Activated B cell treated with CpG ODN at 0.5 μM for 24 hours (primary cell): ENCODE measurements at regions of chr18 and their contacts with region 1.

Region 1: DNA sequence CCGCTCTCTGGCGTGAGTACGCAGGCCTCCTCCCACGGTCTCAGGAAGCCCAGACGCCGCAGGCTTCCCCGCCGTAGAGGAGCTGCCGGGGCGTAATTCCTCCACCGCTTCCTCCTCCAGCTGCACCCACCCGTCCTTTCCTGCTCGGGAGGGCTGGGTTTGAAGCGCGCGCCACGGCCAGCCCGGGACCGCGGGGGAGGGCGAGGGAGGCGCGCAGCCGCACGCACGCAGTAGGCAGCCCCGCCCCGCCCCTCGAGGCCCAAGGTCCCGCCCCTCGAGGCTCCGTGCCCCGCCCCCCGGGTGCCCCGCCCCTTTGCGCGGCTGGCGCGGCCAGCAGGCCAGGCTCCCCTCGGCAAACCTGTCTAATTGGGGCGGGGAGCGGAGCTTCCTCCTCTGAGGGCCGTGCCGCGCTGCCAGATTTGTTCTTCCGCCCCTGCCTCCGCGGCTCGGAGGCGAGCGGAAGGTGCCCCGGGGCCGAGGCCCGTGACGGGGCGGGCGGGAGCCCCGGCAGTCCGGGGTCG is at the start of gene MALT1:
- DNase-seq: peak; percentile 98
- ATAC-seq: peak; percentile 89
- H3K4me3 Mint-ChIP-seq: peak within 1 kb of the TSS; percentile 95
- H3K27ac Mint-ChIP-seq: peak within 1 kb of the TSS; percentile 95
- H3K4me1 Mint-ChIP-seq: peaks cover 74% of the 10 kb centered on the region
- H3K27me3 Mint-ChIP-seq: no peaks in the 10 kb centered on the region
- CTCF ChIP-seq: no peak
- total RNA-seq, gene MALT1: 61.6 and 75.6 TPM in 2 replicates

Region 2: DNA sequence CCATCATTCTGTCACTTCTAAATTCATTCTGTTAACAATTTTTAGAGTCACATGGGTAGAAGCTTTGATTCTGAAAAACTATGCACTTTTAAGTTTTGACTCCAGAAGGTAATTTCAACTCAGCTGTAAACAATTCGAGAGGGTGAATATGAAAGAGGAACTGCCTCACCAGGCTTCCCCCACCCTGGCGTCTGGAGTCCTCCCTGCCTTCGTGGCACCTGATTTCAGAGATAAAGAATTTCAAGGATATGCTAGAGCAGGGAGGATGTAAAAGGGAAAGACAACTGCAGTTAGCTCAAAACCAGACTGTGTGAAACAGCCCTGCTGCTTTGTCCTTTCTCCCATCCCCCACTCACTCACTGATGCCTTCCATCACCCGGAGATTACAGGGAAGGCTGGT is 1195.3 kb before region 1 on chr18:
- CTCF ChIA-PET with region 1: no interaction called
- POLR2A ChIA-PET with region 1: no interaction called
- intact Hi-C with region 1: no loop called
- DNase-seq: no peak
- ATAC-seq: no peak
- H3K4me3 Mint-ChIP-seq: no peak overlapping the region
- H3K27ac Mint-ChIP-seq: no peak overlapping the region
- H3K4me1 Mint-ChIP-seq: peaks cover 7% of the 10 kb centered on the region
- H3K27me3 Mint-ChIP-seq: peaks cover 13% of the 10 kb centered on the region
- CTCF ChIP-seq: no peak

Region 3: DNA sequence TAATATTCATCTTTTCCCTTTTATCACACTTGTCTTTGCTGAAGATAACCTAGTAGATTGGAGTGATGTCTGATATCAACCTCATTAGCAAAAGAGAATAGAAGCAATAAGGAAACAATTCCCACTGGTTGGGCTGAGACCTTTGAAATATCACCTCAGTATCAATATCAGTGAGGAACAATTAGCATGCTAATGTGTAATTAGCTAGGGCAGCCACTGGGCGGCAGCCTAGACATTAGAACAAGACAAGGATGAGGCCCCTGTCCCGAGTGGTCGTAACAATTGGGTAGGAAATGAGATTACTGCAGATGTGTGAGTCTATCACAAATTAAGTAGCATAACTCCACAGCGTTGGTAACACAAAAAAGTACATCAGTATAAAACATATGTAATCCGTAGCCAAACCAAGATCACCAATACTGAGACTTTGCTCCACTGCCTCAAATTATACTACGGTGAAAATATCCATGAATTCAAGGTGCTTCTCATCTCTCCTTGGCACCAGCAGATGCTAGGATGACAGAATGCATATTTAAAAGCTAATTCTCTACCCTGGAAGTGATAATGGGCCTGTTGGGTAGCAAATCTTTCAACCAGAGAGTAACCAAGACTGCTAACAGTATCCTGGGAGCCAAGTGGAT is 141.3 kb before region 1 on chr18:
- CTCF ChIA-PET with region 1: interaction called, 28 read pairs
- POLR2A ChIA-PET with region 1: interaction called, 93 read pairs
- intact Hi-C with region 1: loop called (anchors 1 kb)
- DNase-seq: peak; percentile 54
- ATAC-seq: peak; percentile 82
- H3K4me3 Mint-ChIP-seq: no peak overlapping the region
- H3K27ac Mint-ChIP-seq: no peak overlapping the region
- H3K4me1 Mint-ChIP-seq: peaks cover 44% of the 10 kb centered on the region
- H3K27me3 Mint-ChIP-seq: no peaks in the 10 kb centered on the region
- CTCF ChIP-seq: peak; percentile 83

Region 4: GRCh38 chr18:58552057-58552461 is 119.1 kb before region 1 on chr18:
- CTCF ChIA-PET with region 1: no interaction called
- POLR2A ChIA-PET with region 1: interaction called, 35 read pairs
- intact Hi-C with region 1: loop called (anchors 1 kb)
- DNase-seq: no peak
- ATAC-seq: peak; percentile 84
- H3K4me3 Mint-ChIP-seq: peak overlapping the region; percentile 45
- H3K27ac Mint-ChIP-seq: peak overlapping the region; percentile 84
- H3K4me1 Mint-ChIP-seq: peaks cover 54% of the 10 kb centered on the region
- H3K27me3 Mint-ChIP-seq: no peaks in the 10 kb centered on the region
- CTCF ChIP-seq: no peak

Region 5: DNA sequence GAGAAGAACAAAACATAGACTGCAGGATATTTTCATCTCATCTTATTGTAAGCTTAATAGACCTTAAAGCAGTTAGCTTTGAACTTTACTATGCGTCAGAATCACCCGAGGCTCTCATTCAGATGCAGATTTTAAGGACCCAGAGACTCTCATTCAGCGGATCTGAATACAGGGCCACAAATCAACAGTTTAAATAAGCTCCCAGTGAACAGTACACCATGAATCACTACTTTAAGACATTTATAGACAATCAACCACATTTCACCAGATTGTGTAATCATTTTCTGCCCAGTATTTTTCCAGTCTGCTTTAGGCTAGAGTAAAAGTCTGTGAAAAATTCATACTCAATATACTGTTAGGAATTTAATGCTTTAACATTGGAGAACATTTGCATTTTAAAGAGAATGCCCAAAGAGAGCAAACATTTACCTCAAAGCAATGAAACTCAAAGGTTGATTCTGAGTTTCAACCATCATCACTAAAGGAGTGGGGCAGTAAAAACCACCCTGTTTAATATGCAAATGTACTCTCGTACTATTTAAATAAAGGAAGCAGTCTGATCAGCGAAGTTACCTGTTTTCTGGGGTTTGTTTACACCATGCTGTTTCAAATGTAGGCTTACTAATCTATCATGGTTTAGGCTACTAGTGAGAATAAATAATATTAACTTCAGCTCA is 31.3 kb before region 1 on chr18:
- CTCF ChIA-PET with region 1: no interaction called
- POLR2A ChIA-PET with region 1: interaction called, 6 read pairs
- intact Hi-C with region 1: loop called (anchors 5 kb)
- DNase-seq: no peak
- ATAC-seq: peak; percentile 62
- H3K4me3 Mint-ChIP-seq: peak overlapping the region; percentile 21
- H3K27ac Mint-ChIP-seq: peak overlapping the region; percentile 71
- H3K4me1 Mint-ChIP-seq: peaks cover 22% of the 10 kb centered on the region
- H3K27me3 Mint-ChIP-seq: no peaks in the 10 kb centered on the region
- CTCF ChIP-seq: no peak

Region 6: GRCh38 chr18:58687871-58688308 is 16.7 kb after region 1 on chr18:
- CTCF ChIA-PET with region 1: interaction called, 5 read pairs
- POLR2A ChIA-PET with region 1: interaction called, 12 read pairs
- intact Hi-C with region 1: loop called (anchors 2 kb)
- DNase-seq: no peak
- ATAC-seq: peak; percentile 42
- H3K4me3 Mint-ChIP-seq: peak overlapping the region; percentile 50
- H3K27ac Mint-ChIP-seq: peak overlapping the region; percentile 75
- H3K4me1 Mint-ChIP-seq: peaks cover 34% of the 10 kb centered on the region
- H3K27me3 Mint-ChIP-seq: no peaks in the 10 kb centered on the region
- CTCF ChIP-seq: no peak

Region 7: GRCh38 chr18:58960946-58961722 is 290.0 kb after region 1 on chr18:
- CTCF ChIA-PET with region 1: no interaction called
- POLR2A ChIA-PET with region 1: no interaction called
- intact Hi-C with region 1: loop called (anchors 10 kb)
- DNase-seq: no peak
- ATAC-seq: no peak
- H3K4me3 Mint-ChIP-seq: peak overlapping the region; percentile 29
- H3K27ac Mint-ChIP-seq: peak overlapping the region; percentile 81
- H3K4me1 Mint-ChIP-seq: peaks cover 53% of the 10 kb centered on the region
- H3K27me3 Mint-ChIP-seq: no peaks in the 10 kb centered on the region
- CTCF ChIP-seq: no peak